ENCODE measurements at regions of chr1 and their contacts with region 1.

Region 1: DNA sequence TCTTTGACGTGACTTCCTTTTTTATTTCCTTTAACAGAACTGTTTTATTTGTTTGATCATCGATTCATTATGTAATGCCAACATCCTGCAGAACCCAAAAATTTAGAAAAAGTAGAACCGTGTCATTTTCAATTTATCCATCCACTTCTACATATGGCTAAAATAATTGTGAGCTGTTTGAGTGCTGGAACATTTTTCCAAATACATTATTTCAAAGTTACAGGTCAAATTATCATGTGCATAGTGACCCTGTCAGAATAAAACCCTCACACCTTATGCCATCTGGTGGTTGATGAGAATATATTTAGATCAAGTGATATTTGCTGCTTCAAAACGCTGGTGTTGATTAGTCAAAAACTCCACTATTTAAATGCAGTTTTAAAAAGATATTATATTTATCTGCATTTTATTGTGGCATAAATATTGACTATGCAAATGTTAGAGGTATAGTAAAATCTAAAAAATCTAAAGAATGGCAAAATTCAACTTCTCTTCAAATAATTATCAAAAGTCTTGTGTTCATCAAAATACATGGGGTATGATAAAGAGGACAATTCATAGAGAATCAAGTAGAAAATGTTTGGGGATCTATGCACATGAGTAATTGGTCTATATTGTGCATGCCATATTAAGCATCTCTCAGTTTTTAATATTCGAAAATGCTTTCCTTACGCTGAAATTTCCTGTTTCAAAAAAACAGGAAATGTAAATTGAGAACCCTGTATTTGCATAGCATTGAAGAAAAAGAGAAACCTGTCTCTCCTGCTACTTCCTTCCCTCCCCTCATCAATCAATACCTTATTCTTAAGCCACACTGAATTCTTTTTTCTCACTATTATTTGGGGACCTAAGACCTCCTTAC is 39.7 kb downstream of the UBE2U start:
- DNase-seq: peak; percentile 57
- H3K4me3 Mint-ChIP-seq: no peak overlapping the region
- H3K27ac Mint-ChIP-seq: no peak overlapping the region
- H3K4me1 Mint-ChIP-seq: no peaks in the 10 kb centered on the region
- H3K27me3 Mint-ChIP-seq: no peaks in the 10 kb centered on the region
- CTCF ChIP-seq: peak; percentile 38

Region 2: DNA sequence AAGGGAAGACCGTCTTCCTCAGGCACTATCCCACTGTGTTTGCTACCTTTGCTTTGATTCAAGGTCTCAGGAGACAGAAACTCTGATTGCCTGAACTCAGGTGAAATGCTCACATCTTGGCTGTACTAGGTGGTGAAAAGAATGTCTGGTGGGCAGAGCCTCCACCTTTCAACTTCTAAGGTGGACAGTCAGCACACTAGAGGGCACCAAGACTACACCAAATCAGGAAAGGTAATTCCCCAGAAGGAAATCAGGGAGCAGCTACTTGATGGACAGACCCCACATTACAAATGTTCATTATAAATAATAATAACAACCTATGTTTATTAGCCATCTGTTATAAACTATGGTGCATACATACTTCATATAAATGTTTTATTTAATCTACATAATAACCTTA is 1238.3 kb before region 1 on chr1:
- CTCF ChIA-PET with region 1: no interaction called
- POLR2A ChIA-PET with region 1: no interaction called
- intact Hi-C with region 1: loop called (anchors 10 kb)
- DNase-seq: peak; percentile 43
- H3K4me3 Mint-ChIP-seq: no peak overlapping the region
- H3K27ac Mint-ChIP-seq: no peak overlapping the region
- H3K4me1 Mint-ChIP-seq: no peaks in the 10 kb centered on the region
- H3K27me3 Mint-ChIP-seq: peaks cover 33% of the 10 kb centered on the region
- CTCF ChIP-seq: peak; percentile 23

Region 3: GRCh38 chr1:63615768-63616420 is 627.2 kb before region 1 on chr1:
- CTCF ChIA-PET with region 1: interaction called, 52 read pairs
- POLR2A ChIA-PET with region 1: no interaction called
- intact Hi-C with region 1: loop called (anchors 1 kb)
- DNase-seq: peak; percentile 82
- H3K4me3 Mint-ChIP-seq: no peak overlapping the region
- H3K27ac Mint-ChIP-seq: no peak overlapping the region
- H3K4me1 Mint-ChIP-seq: peaks cover 24% of the 10 kb centered on the region
- H3K27me3 Mint-ChIP-seq: no peaks in the 10 kb centered on the region
- CTCF ChIP-seq: peak; percentile 72

Region 4: GRCh38 chr1:63674238-63674864 is 568.8 kb before region 1 on chr1:
- CTCF ChIA-PET with region 1: interaction called, 79 read pairs
- POLR2A ChIA-PET with region 1: no interaction called
- intact Hi-C with region 1: loop called (anchors 1 kb)
- DNase-seq: peak; percentile 90
- H3K4me3 Mint-ChIP-seq: no peak overlapping the region
- H3K27ac Mint-ChIP-seq: no peak overlapping the region
- H3K4me1 Mint-ChIP-seq: peaks cover 11% of the 10 kb centered on the region
- H3K27me3 Mint-ChIP-seq: no peaks in the 10 kb centered on the region
- CTCF ChIP-seq: peak; percentile 58

Region 5: GRCh38 chr1:63773815-63774616 is 469.1 kb before region 1 on chr1 and contains the start of gene ROR1:
- CTCF ChIA-PET with region 1: interaction called, 6 read pairs
- POLR2A ChIA-PET with region 1: interaction called, 5 read pairs
- intact Hi-C with region 1: loop called (anchors 1 kb)
- DNase-seq: peak; percentile 85
- H3K4me3 Mint-ChIP-seq: peak within 1 kb of the TSS; percentile 93
- H3K27ac Mint-ChIP-seq: peak within 1 kb of the TSS; percentile 29
- H3K4me1 Mint-ChIP-seq: peaks cover 16% of the 10 kb centered on the region
- H3K27me3 Mint-ChIP-seq: no peaks in the 10 kb centered on the region
- CTCF ChIP-seq: peak; percentile 57
- total RNA-seq, gene ROR1: 4.6 and 10.3 TPM in 2 replicates

Measured in MCF 10A (cell line).